Activated B cell treated with CpG ODN at 0.5 μM for 24 hours (primary cell): ENCODE measurements at regions of chr19 and their contacts with region 1.

Region 1: DNA sequence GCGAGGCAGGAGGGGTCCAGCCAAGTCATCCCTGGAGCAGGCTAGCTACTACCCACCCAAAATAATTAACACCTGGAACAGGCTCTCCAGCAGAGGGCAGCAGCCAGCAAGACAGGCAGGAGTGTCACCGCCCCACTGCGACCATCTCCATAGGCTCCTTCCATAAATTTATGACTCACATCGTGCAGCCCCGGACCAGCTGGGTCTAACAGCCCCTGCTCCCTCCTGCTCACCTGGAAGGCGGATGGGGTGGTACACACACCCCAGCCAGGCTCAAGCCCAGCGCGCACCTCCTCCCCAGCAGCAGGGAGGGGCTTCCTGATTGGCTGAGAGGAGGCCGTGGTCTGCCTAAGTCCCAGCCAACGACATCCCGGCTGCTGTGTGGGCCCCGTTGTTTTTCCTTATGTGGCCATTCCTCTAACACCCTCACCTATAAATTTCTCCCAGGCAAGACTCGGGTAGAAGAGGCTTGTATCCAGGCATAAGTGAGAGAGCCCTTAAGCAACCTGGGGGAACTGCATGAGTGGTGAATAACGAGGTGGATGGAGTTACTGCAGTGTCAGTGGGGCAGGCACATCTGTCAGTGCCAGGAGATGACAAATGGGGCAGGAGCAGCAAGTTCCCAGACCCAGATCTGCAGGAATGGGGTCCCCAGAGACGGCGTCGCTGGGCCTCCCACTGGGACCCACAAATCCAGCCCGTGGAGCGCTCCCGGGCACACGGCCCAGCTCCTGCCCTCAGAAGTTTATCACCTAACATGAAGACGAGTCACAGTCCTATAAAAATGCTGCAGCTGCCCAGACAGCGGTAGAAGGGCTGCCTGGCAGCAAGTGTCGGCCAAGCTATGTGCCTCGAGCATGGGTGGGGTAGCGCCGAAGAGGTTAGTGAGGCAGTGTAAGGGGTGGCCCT is 43.1 kb downstream of the CEBPG start:
- DNase-seq: peak; percentile 48
- ATAC-seq: peak; percentile 83
- H3K4me3 Mint-ChIP-seq: peak overlapping the region; percentile 58
- H3K27ac Mint-ChIP-seq: no peak overlapping the region
- H3K4me1 Mint-ChIP-seq: peaks cover 5% of the 10 kb centered on the region
- H3K27me3 Mint-ChIP-seq: no peaks in the 10 kb centered on the region
- CTCF ChIP-seq: no peak

Region 2: DNA sequence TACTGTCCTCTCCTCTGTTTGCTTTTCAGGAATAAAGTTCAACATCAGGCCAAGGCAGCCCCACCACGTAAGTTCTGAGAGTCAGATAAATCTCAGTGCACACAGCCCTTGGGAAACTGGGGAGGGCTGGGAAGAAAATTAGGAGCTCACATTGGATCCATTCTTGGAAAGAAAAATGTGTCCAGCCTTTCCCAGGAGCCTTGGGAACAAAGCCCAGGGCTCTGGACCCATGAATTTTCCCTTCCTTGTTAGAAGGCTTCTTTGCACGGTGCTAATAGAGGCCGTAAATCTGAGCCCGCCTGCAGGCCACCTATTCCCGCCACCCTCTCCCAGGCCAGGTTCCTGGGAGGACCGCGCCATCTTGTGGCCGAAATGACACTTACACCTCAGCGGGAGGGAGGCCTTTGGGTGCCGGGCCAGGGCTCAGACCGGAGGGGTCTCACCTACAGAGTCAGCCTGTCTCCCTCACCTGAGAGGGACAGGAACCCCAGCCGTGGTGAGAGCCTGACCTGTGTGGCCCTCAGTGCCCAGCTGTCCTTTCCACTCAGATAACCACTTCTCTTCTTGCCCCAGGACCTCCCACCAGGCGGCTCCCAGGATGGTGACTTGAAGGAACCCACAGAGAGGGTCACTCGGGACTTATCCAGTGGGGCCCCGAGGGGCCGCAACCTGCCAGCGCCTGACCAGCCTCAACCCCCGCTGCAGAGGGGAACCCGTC is 355.0 kb after region 1 on chr19:
- CTCF ChIA-PET with region 1: interaction called, 3 read pairs
- POLR2A ChIA-PET with region 1: no interaction called
- intact Hi-C with region 1: loop called (anchors 1 kb)
- DNase-seq: peak; percentile 42
- ATAC-seq: peak; percentile 54
- H3K4me3 Mint-ChIP-seq: no peak overlapping the region
- H3K27ac Mint-ChIP-seq: no peak overlapping the region
- H3K4me1 Mint-ChIP-seq: no peaks in the 10 kb centered on the region
- H3K27me3 Mint-ChIP-seq: peaks cover 16% of the 10 kb centered on the region
- CTCF ChIP-seq: no peak